CD8-positive, alpha-beta T cell (primary cell): ENCODE measurements at regions of chr18 and their contacts with region 1.

Region 1: DNA sequence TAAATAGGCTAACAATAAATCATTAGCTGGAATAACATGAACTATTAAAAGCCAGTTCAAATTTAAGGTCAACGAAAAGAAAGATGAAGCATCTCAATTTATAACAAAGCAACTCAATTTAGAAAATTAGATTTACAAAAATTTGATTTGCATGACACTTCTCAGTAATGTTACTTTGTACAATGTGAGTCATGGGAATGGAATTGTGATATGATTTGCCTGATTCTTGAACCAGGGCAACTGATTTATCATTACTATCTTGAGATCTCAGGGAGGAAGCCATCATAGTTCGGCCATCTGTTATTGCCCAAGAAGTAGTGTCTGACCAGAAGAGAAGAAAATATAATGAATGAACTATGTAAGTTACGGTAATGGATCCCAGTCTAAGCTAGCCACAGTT is 193.1 kb downstream of the RIT2 start:
- DNase-seq: no peak
- ATAC-seq: no peak
- H3K4me3 ChIP-seq: no peak overlapping the region
- H3K4me3 Mint-ChIP-seq: no peak overlapping the region
- H3K27ac ChIP-seq: no peak overlapping the region
- H3K27ac Mint-ChIP-seq: no peak overlapping the region
- H3K4me1 ChIP-seq: no peaks in the 10 kb centered on the region
- H3K4me1 Mint-ChIP-seq: no peaks in the 10 kb centered on the region
- H3K27me3 ChIP-seq: no peaks in the 10 kb centered on the region
- H3K27me3 Mint-ChIP-seq: no peaks in the 10 kb centered on the region
- CTCF ChIP-seq: no peak

Region 2: GRCh38 chr18:41875094-41875780 is 1047.1 kb before region 1 on chr18:
- CTCF ChIA-PET with region 1: no interaction called
- POLR2A ChIA-PET with region 1: no interaction called
- intact Hi-C with region 1: no loop called
- DNase-seq: no peak
- ATAC-seq: no peak
- H3K4me3 ChIP-seq: no peak overlapping the region
- H3K4me3 Mint-ChIP-seq: no peak overlapping the region
- H3K27ac ChIP-seq: no peak overlapping the region
- H3K27ac Mint-ChIP-seq: no peak overlapping the region
- H3K4me1 ChIP-seq: no peaks in the 10 kb centered on the region
- H3K4me1 Mint-ChIP-seq: no peaks in the 10 kb centered on the region
- H3K27me3 ChIP-seq: no peaks in the 10 kb centered on the region
- H3K27me3 Mint-ChIP-seq: peaks cover 5% of the 10 kb centered on the region
- CTCF ChIP-seq: no peak

Region 3: GRCh38 chr18:42839408-42839807 is 83.0 kb before region 1 on chr18:
- CTCF ChIA-PET with region 1: no interaction called
- POLR2A ChIA-PET with region 1: no interaction called
- intact Hi-C with region 1: loop called in 1 of 2 experiments (anchors 5 kb)
- DNase-seq: no peak
- ATAC-seq: no peak
- H3K4me3 ChIP-seq: no peak overlapping the region
- H3K4me3 Mint-ChIP-seq: no peak overlapping the region
- H3K27ac ChIP-seq: no peak overlapping the region
- H3K27ac Mint-ChIP-seq: no peak overlapping the region
- H3K4me1 ChIP-seq: no peaks in the 10 kb centered on the region
- H3K4me1 Mint-ChIP-seq: no peaks in the 10 kb centered on the region
- H3K27me3 ChIP-seq: no peaks in the 10 kb centered on the region
- H3K27me3 Mint-ChIP-seq: no peaks in the 10 kb centered on the region
- CTCF ChIP-seq: no peak

Region 4: DNA sequence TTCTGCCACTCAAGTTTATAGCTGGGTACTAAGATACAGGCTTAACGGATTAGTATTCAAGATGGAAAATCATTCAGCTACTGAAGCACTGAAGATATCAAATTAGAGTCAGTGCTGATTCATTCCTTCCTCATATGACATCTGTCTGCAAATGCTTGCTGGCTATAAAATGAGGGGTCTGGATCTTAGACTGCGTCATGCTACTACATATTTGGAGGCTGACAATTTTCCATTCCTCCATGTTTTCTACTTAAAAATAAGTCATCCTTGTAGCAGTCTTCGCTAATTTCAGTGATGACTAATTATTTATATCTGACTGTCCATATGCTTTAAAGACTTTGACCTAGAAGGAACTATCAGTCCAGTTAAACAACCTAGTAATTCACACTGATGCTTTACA is 40.2 kb before region 1 on chr18:
- CTCF ChIA-PET with region 1: no interaction called
- POLR2A ChIA-PET with region 1: no interaction called
- intact Hi-C with region 1: no loop called
- DNase-seq: no peak
- ATAC-seq: no peak
- H3K4me3 ChIP-seq: no peak overlapping the region
- H3K4me3 Mint-ChIP-seq: no peak overlapping the region
- H3K27ac ChIP-seq: no peak overlapping the region
- H3K27ac Mint-ChIP-seq: no peak overlapping the region
- H3K4me1 ChIP-seq: no peaks in the 10 kb centered on the region
- H3K4me1 Mint-ChIP-seq: no peaks in the 10 kb centered on the region
- H3K27me3 ChIP-seq: no peaks in the 10 kb centered on the region
- H3K27me3 Mint-ChIP-seq: no peaks in the 10 kb centered on the region
- CTCF ChIP-seq: no peak